Activated B cell treated with CpG ODN at 0.5 μM for 24 hours (primary cell): ENCODE measurements at regions of chr2 and their contacts with region 1.

Region 1: GRCh38 chr2:197168705-197169104 is 141.9 kb downstream of the ANKRD44 start:
- DNase-seq: peak; percentile 47
- ATAC-seq: peak; percentile 82
- H3K4me3 Mint-ChIP-seq: no peak overlapping the region
- H3K27ac Mint-ChIP-seq: peak overlapping the region; percentile 78
- H3K4me1 Mint-ChIP-seq: peaks cover 77% of the 10 kb centered on the region
- H3K27me3 Mint-ChIP-seq: no peaks in the 10 kb centered on the region
- CTCF ChIP-seq: no peak

Region 2: GRCh38 chr2:197011799-197012641 is 156.7 kb before region 1 on chr2:
- CTCF ChIA-PET with region 1: no interaction called
- POLR2A ChIA-PET with region 1: no interaction called
- intact Hi-C with region 1: loop called (anchors 2 kb)
- DNase-seq: no peak
- ATAC-seq: peak; percentile 57
- H3K4me3 Mint-ChIP-seq: no peak overlapping the region
- H3K27ac Mint-ChIP-seq: peak overlapping the region; percentile 74
- H3K4me1 Mint-ChIP-seq: peaks cover 5% of the 10 kb centered on the region
- H3K27me3 Mint-ChIP-seq: no peaks in the 10 kb centered on the region
- CTCF ChIP-seq: no peak

Region 3: DNA sequence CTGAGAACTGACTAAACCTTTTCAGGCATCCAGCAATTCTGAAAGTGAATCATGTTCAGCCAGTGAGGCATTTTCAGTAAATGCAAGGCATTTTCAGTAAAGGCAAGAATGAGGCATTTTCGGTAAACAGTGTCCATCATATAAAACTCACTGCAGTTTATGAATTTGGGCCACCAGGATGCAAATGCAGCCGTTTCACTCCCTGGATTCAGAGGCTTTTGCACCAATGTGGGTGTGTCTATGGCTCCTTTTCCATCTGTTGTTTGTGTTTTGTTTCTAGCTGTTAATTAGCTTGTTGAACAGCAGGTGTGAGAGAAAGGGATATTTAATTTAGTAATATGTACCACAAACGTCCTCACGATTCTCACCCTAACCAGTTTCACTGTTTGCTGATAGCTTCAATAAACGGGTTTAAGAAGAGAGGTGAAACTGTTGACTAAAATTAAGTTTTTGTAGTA is 125.9 kb before region 1 on chr2:
- CTCF ChIA-PET with region 1: no interaction called
- POLR2A ChIA-PET with region 1: no interaction called
- intact Hi-C with region 1: no loop called
- DNase-seq: no peak
- ATAC-seq: no peak
- H3K4me3 Mint-ChIP-seq: no peak overlapping the region
- H3K27ac Mint-ChIP-seq: no peak overlapping the region
- H3K4me1 Mint-ChIP-seq: peaks cover 9% of the 10 kb centered on the region
- H3K27me3 Mint-ChIP-seq: no peaks in the 10 kb centered on the region
- CTCF ChIP-seq: no peak

Region 4: GRCh38 chr2:197130318-197130717 is 38.4 kb before region 1 on chr2:
- CTCF ChIA-PET with region 1: interaction called, 16 read pairs
- POLR2A ChIA-PET with region 1: interaction called, 4 read pairs
- intact Hi-C with region 1: loop called (anchors 1 kb)
- DNase-seq: no peak
- ATAC-seq: peak; percentile 69
- H3K4me3 Mint-ChIP-seq: peak overlapping the region; percentile 82
- H3K27ac Mint-ChIP-seq: peak overlapping the region; percentile 98
- H3K4me1 Mint-ChIP-seq: peaks cover 71% of the 10 kb centered on the region
- H3K27me3 Mint-ChIP-seq: no peaks in the 10 kb centered on the region
- CTCF ChIP-seq: no peak

Region 5: GRCh38 chr2:197145471-197146138 is 23.1 kb before region 1 on chr2:
- CTCF ChIA-PET with region 1: interaction called, 7 read pairs
- POLR2A ChIA-PET with region 1: interaction called, 15 read pairs
- intact Hi-C with region 1: loop called (anchors 1 kb)
- DNase-seq: no peak
- ATAC-seq: peak; percentile 91
- H3K4me3 Mint-ChIP-seq: peak overlapping the region; percentile 67
- H3K27ac Mint-ChIP-seq: peak overlapping the region; percentile 97
- H3K4me1 Mint-ChIP-seq: peaks cover 91% of the 10 kb centered on the region
- H3K27me3 Mint-ChIP-seq: no peaks in the 10 kb centered on the region
- CTCF ChIP-seq: no peak

Region 6: GRCh38 chr2:197152451-197153228 is 16.1 kb before region 1 on chr2:
- CTCF ChIA-PET with region 1: interaction called, 25 read pairs
- POLR2A ChIA-PET with region 1: interaction called, 8 read pairs
- intact Hi-C with region 1: loop called (anchors 1 kb)
- DNase-seq: no peak
- ATAC-seq: peak; percentile 84
- H3K4me3 Mint-ChIP-seq: peak overlapping the region; percentile 79
- H3K27ac Mint-ChIP-seq: peak overlapping the region; percentile 97
- H3K4me1 Mint-ChIP-seq: peaks cover 97% of the 10 kb centered on the region
- H3K27me3 Mint-ChIP-seq: no peaks in the 10 kb centered on the region
- CTCF ChIP-seq: no peak

Region 7: GRCh38 chr2:197378494-197379307 is 210.0 kb after region 1 on chr2:
- CTCF ChIA-PET with region 1: interaction called, 4 read pairs
- POLR2A ChIA-PET with region 1: no interaction called
- intact Hi-C with region 1: loop called (anchors 1 kb)
- DNase-seq: peak; percentile 29
- ATAC-seq: peak; percentile 66
- H3K4me3 Mint-ChIP-seq: no peak overlapping the region
- H3K27ac Mint-ChIP-seq: no peak overlapping the region
- H3K4me1 Mint-ChIP-seq: peaks cover 11% of the 10 kb centered on the region
- H3K27me3 Mint-ChIP-seq: no peaks in the 10 kb centered on the region
- CTCF ChIP-seq: peak; percentile 43